ENCODE measurements at regions of chr18 and their contacts with region 1.

Region 1: GRCh38 chr18:8988261-8988871 is 114.1 kb upstream of the NDUFV2 start:
- DNase-seq: peak in 4 of 5 donors; percentile 33 to 44 (median 43)
- ATAC-seq: peak; percentile 69 to 84 (median 80)
- H3K4me3 ChIP-seq: no peak overlapping the region
- H3K27ac ChIP-seq: peak overlapping the region in 1 of 12 donors; percentile 16
- H3K4me1 ChIP-seq: peaks cover 0 to 10% (median 0%) of the 10 kb centered on the region in 12 donors
- H3K27me3 ChIP-seq: no peaks in the 10 kb centered on the region
- CTCF ChIP-seq: peak; percentile 50 to 81 (median 76)
- POLR2A ChIP-seq: no peak

Region 2: DNA sequence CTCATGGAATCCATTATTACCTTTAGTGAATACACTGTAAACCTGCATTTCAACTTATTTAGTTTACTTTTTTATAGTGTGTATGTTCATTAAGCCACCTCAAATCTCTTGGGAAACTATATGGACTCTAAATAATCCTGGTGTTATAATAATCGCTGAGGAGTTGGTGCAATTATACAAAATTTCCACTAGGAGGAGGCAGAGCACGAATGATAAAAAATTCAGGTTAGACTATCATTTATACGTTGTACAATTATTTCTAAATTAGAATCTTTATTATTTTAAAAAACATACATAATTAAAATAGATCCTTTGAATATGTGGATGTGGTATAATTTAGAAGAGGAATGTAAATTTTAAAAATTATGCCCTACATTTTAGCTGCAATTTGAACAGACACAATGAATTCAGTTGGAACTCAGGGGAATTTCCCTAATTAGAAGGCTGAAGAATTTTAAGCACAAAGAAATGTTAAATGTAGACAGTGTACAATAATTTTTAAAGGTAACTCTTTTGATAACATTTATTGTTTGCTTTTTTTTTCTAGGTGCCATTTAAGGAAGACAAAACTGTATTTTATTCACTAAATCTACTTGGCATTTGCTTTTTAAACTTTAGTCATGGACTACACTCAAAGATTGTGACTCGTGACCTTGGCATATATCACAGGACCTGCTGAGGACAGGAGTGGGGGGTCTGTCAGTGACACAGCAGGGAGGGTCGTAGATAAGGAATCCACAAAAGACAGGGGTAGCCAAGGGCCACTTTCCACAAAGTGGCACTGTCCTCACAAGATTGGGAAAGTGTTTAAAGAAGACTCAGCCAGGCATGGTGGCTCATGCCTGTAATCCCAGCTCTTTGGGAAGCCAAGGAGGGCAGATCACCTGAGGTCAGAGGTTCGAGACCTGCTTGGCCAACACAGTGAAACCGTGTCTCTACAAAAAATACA is 333.6 kb before region 1 on chr18:
- intact Hi-C with region 1: loop called (anchors 2 to 10 kb)
- DNase-seq: no peak
- ATAC-seq: no peak
- H3K4me3 ChIP-seq: no peak overlapping the region
- H3K27ac ChIP-seq: no peak overlapping the region
- H3K4me1 ChIP-seq: peaks cover 0 to 6% (median 0%) of the 10 kb centered on the region in 12 donors
- H3K27me3 ChIP-seq: peaks cover 0 to 8% (median 0%) of the 10 kb centered on the region in 9 donors
- CTCF ChIP-seq: peak; percentile 69 to 89 (median 78)
- POLR2A ChIP-seq: no peak

Region 3: GRCh38 chr18:8696749-8697211 is 291.6 kb before region 1 on chr18:
- intact Hi-C with region 1: loop called (anchors 1 to 5 kb)
- DNase-seq: peak; percentile 51 to 81 (median 68)
- ATAC-seq: peak in 3 of 4 donors; percentile 85 to 92 (median 91)
- H3K4me3 ChIP-seq: no peak overlapping the region
- H3K27ac ChIP-seq: no peak overlapping the region
- H3K4me1 ChIP-seq: no peaks in the 10 kb centered on the region
- H3K27me3 ChIP-seq: peaks cover 0 to 10% (median 0%) of the 10 kb centered on the region in 9 donors
- CTCF ChIP-seq: peak; percentile 88 to 98 (median 92)
- POLR2A ChIP-seq: no peak

Region 4: DNA sequence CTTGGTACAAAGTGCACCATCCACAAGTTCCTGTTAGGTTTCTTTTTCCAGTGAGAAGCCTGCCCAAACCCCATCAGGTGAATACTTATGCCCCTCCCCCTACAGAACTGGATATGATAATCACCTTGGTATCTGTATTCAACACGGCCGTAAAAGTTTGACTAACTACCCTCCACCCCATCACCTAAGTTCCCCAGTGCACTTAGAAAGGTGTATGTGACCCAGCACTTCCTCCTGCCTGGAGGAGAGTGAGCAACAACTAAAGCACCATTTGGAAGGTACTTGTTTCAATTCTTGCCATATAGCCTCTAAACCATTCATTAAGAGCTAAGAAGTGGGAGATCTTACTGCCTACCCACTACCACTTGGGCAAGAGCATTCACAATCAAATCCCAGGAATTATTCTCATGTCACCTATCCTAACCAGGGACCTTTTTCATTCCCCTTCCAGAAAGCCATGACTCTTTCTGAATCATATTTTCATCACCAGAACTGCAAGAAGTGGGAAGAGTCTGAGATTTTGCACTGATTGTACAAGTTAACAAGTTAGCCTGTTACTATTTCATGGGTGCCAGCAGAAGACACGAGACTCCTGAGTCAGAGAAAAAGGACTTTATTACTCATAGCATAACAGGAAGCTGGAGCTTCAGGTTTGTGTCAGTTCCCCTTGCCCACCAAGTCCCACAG is 60.6 kb after region 1 on chr18:
- intact Hi-C with region 1: loop called in 3 of 10 experiments (anchors 10 kb)
- DNase-seq: no peak
- ATAC-seq: no peak
- H3K4me3 ChIP-seq: no peak overlapping the region
- H3K27ac ChIP-seq: no peak overlapping the region
- H3K4me1 ChIP-seq: no peaks in the 10 kb centered on the region
- H3K27me3 ChIP-seq: no peaks in the 10 kb centered on the region
- CTCF ChIP-seq: no peak
- POLR2A ChIP-seq: no peak

Region 5: GRCh38 chr18:9055185-9055584 is 66.8 kb after region 1 on chr18:
- intact Hi-C with region 1: loop called in 2 of 10 experiments (anchors 10 kb)
- DNase-seq: no peak
- ATAC-seq: peak in 2 of 4 donors; percentile 46 to 58
- H3K4me3 ChIP-seq: no peak overlapping the region
- H3K27ac ChIP-seq: no peak overlapping the region
- H3K4me1 ChIP-seq: peaks cover 0 to 12% (median 0%) of the 10 kb centered on the region in 12 donors
- H3K27me3 ChIP-seq: no peaks in the 10 kb centered on the region
- CTCF ChIP-seq: peak in 8 of 12 donors; percentile 16 to 54 (median 40)
- POLR2A ChIP-seq: no peak

Measured in heart left ventricle (tissue), 16 donors.